Caco-2 (cell line): ENCODE measurements at regions of chr2 and their contacts with region 1.

Region 1: GRCh38 chr2:37849911-37850310 is 75.2 kb upstream of the RMDN2 start:
- DNase-seq: no peak
- H3K4me3 ChIP-seq: no peak overlapping the region
- H3K4me3 Mint-ChIP-seq: no peak overlapping the region
- H3K27ac Mint-ChIP-seq: no peak overlapping the region
- H3K4me1 ChIP-seq: no peaks in the 10 kb centered on the region
- H3K4me1 Mint-ChIP-seq: no peaks in the 10 kb centered on the region
- H3K27me3 ChIP-seq: no peaks in the 10 kb centered on the region
- H3K27me3 Mint-ChIP-seq: no peaks in the 10 kb centered on the region
- CTCF ChIP-seq: no peak

Region 2: DNA sequence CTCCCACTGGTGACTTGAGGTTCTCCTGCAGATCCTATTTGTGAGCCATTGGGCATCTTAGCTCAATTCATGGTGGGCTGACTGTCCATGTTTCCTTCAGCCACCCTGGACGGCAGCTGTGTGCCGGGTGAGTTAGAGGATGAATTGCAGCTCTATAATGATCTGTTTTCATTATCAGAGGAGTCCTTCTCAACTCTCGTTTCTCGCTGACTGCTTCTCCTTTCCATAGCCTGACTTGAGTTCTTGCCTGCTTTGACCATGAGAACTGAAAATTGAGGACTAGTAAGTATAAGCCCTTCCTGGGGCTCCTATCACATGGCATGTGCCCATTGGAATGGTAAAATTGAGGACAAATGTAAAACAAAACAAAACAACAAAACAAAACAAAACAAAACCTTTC is 300.3 kb before region 1 on chr2:
- CTCF ChIA-PET with region 1: no interaction called
- POLR2A ChIA-PET with region 1: interaction called, 21 read pairs
- intact Hi-C with region 1: no loop called
- DNase-seq: no peak
- H3K4me3 ChIP-seq: no peak overlapping the region
- H3K4me3 Mint-ChIP-seq: no peak overlapping the region
- H3K27ac Mint-ChIP-seq: no peak overlapping the region
- H3K4me1 ChIP-seq: peaks cover 7% of the 10 kb centered on the region; the same call in 1 of the 2 replicates
- H3K4me1 Mint-ChIP-seq: no peaks in the 10 kb centered on the region
- H3K27me3 ChIP-seq: no peaks in the 10 kb centered on the region
- H3K27me3 Mint-ChIP-seq: no peaks in the 10 kb centered on the region
- CTCF ChIP-seq: no peak